Activated CD8-positive, alpha-beta memory T cell treated with anti-CD3 and anti-CD28 coated beads, Interleukin-2, amount 10 ng/mL, durations not matched to agents 7 days and 5 days (primary cell): ENCODE measurements at regions of chr10 and their contacts with region 1.

Region 1: DNA sequence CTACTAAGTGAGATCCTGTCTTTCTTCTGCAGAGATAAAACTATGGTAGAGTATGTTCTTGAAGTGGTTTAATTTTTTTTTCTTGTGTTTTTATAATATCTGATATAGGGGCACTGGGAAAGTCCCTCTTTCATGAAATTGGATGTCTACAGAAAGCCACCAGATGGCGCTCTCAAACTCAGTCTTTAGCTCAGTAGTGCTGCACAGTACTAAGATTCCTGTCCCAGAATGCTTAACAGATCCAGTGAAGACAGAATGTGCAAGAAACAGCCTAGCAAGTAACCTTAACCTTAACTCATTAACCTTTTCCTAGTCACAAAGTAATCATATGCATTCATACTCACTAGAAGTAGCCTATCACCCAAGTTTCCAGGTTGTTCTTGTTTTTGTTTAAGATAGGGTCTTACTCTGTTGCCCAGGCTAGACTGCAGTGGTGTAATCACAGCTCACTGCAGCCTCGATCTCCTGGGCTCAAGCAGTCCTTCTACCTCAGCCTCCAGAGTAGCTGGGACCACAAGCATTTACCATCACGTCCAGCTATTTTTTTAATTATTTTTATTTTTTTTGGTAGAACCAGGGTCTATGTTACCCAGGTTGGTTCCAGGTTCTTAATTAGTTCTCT is 56.7 kb downstream of the IDE start:
- DNase-seq: peak; percentile 75
- ATAC-seq: peak; percentile 94
- H3K4me3 Mint-ChIP-seq: no peak overlapping the region
- H3K27ac Mint-ChIP-seq: no peak overlapping the region
- H3K4me1 Mint-ChIP-seq: peaks cover 4% of the 10 kb centered on the region
- H3K27me3 Mint-ChIP-seq: no peaks in the 10 kb centered on the region

Region 2: DNA sequence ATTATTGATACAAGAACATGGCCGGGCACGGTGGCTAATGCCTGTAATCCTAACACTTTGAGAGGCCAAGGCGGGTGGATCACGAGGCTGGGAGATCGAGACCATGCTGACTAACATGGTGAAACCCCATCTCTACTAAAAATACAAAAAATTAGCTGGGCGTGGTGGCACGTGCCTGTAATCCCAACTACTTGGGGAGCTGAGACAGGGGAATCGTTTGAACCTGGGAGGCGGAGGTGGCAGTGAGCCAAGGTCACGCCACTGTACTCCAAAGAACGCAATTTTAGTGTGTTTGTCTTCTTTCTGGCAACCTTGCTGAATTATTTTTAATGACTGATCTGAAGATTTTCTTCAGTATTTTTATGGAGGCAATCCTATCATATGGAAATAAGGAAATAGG is 10.6 kb after region 1 on chr10:
- CTCF ChIA-PET with region 1: interaction called, 17 read pairs
- DNase-seq: no peak
- ATAC-seq: no peak
- H3K4me3 Mint-ChIP-seq: no peak overlapping the region
- H3K27ac Mint-ChIP-seq: no peak overlapping the region
- H3K4me1 Mint-ChIP-seq: no peaks in the 10 kb centered on the region
- H3K27me3 Mint-ChIP-seq: no peaks in the 10 kb centered on the region

Region 3: GRCh38 chr10:92544296-92544695 is 27.2 kb after region 1 on chr10:
- CTCF ChIA-PET with region 1: interaction called, 10 read pairs
- DNase-seq: no peak
- ATAC-seq: no peak
- H3K4me3 Mint-ChIP-seq: no peak overlapping the region
- H3K27ac Mint-ChIP-seq: no peak overlapping the region
- H3K4me1 Mint-ChIP-seq: peaks cover 12% of the 10 kb centered on the region
- H3K27me3 Mint-ChIP-seq: no peaks in the 10 kb centered on the region

Region 4: GRCh38 chr10:92573798-92574547 is 56.8 kb after region 1 on chr10 and contains the start of gene IDE:
- CTCF ChIA-PET with region 1: interaction called, 38 read pairs
- DNase-seq: peak; percentile 89
- ATAC-seq: peak; percentile 80
- H3K4me3 Mint-ChIP-seq: peak within 1 kb of the TSS; percentile 68
- H3K27ac Mint-ChIP-seq: peak within 1 kb of the TSS; percentile 80
- H3K4me1 Mint-ChIP-seq: peaks cover 31% of the 10 kb centered on the region
- H3K27me3 Mint-ChIP-seq: peaks cover 4% of the 10 kb centered on the region
- total RNA-seq, gene IDE: 14.1 to 25.9 TPM